Activated CD8-positive, alpha-beta T cell treated with anti-CD3 and anti-CD28 coated beads for 36 hours (primary cell): ENCODE measurements at regions of chr10 and their contacts with region 1.

Region 1: DNA sequence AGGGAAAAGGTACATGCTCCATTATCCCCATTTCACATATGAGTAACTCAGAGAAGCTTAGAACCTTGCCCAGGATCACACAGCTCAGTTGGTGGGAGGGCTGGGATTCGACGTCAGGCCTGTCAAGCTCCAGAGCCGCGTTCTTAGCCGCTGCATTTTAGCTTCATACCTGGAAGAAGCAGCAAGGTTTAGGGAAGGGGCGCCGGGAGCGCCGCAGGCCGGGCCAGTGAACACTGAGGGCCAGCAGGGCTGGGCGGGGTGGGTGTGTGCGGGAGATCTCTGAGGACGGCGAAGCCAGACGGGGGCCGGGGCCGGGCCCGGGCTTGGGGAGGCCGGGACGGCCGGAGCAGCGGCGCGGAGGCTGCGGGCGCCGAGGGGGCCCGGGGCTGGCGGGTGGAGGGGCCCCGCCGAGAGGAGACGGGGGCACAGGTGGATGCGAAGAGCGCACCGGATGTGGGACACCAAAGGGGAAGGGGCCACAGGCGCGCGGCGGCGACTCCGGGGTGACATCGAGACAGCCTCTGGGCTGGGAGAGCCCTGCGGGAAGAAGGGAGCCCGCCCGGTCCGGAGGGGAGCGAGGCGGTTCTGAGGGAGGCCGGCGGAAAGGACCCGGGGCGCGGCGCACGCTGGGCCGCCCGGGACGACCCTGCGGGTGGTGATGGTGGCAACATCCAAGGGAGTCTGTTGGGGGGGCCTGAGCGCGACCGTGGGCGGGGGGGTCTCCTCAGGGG is 498 bp downstream of the NDST2 start:
- DNase-seq: peak; percentile 65
- ATAC-seq: peak; percentile 15
- H3K4me3 Mint-ChIP-seq: peak overlapping the region; percentile 82
- H3K27ac Mint-ChIP-seq: peak overlapping the region; percentile 98
- H3K4me1 Mint-ChIP-seq: peaks cover 44% of the 10 kb centered on the region
- H3K27me3 Mint-ChIP-seq: no peaks in the 10 kb centered on the region
- CTCF ChIP-seq: no peak

Region 2: GRCh38 chr10:73743905-73744663 is 66.8 kb before region 1 on chr10 and contains the start of gene SEC24C:
- CTCF ChIA-PET with region 1: no interaction called
- POLR2A ChIA-PET with region 1: interaction called, 17 read pairs
- intact Hi-C with region 1: no loop called
- DNase-seq: peak; percentile 97
- ATAC-seq: peak; percentile 91
- H3K4me3 Mint-ChIP-seq: peak within 1 kb of the TSS; percentile 97
- H3K27ac Mint-ChIP-seq: peak within 1 kb of the TSS; percentile 100
- H3K4me1 Mint-ChIP-seq: peaks cover 36% of the 10 kb centered on the region
- H3K27me3 Mint-ChIP-seq: no peaks in the 10 kb centered on the region
- CTCF ChIP-seq: no peak
- total RNA-seq, gene SEC24C: 87.5 to 88.7 TPM

Region 3: DNA sequence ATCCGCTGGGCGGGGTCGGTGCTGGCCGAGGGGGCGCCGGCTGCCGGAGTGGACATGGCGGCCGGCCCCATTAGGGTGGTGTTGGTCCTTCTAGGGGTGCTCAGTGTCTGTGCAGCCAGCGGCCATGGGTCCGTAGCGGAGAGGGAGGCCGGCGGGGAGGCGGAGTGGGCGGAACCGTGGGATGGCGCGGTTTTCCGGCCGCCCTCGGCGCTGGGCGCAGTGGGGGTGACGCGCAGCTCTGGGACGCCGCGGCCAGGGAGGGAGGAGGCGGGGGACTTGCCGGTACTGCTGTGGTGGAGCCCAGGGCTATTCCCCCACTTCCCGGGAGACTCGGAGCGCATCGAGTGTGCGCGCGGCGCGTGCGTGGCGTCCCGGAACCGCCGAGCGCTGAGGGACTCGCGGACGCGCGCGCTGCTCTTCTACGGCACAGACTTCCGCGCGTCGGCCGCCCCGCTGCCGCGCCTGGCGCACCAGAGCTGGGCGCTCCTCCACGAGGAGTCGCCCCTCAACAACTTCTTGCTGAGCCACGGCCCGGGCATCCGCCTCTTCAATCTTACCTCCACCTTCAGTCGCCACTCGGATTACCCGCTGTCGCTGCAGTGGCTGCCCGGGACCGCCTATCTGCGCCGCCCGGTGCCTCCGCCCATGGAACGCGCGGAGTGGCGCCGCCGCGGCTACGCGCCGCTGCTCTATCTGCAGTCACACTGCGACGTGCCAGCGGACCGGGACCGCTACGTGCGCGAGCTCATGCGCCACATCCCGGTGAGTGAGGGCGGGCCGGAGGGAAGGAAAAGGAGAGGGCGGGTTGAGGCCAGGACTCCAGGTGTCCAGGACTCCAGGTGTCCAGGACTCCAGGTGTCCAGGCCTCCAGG is 38.4 kb before region 1 on chr10:
- CTCF ChIA-PET with region 1: interaction called, 4 read pairs
- POLR2A ChIA-PET with region 1: interaction called, 20 read pairs
- intact Hi-C with region 1: no loop called
- DNase-seq: peak; percentile 84
- ATAC-seq: peak; percentile 75
- H3K4me3 Mint-ChIP-seq: peak overlapping the region; percentile 89
- H3K27ac Mint-ChIP-seq: peak overlapping the region; percentile 95
- H3K4me1 Mint-ChIP-seq: peaks cover 38% of the 10 kb centered on the region
- H3K27me3 Mint-ChIP-seq: no peaks in the 10 kb centered on the region
- CTCF ChIP-seq: no peak

Region 4: DNA sequence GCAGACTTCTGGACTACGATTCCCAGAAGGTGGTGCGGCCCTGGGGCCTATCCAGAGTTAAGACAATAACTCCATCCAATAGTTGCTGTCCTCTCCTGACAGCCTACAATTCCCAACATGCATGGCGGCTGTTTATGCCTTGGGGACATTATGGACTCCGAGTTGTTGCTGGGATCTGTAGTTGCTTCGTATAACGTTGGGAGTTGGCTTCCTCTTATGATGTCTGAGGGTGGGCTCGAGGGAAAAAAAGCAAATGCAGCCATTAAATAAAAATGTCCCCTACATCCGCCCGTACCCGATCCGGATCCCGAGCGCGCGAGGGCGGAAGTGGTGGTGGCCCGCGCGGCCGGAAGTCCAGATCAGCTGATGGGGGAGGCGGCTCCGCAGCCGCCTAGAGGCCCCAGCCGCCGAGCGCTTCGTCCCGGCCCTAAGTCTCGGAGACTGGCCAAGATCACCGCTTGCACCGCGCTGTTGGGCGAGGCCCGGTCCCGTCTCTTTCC is 25.6 kb before region 1 on chr10 and contains the start of gene ZSWIM8:
- CTCF ChIA-PET with region 1: interaction called, 5 read pairs
- POLR2A ChIA-PET with region 1: interaction called, 86 read pairs
- intact Hi-C with region 1: no loop called
- DNase-seq: peak; percentile 93
- ATAC-seq: peak; percentile 88
- H3K4me3 Mint-ChIP-seq: peak within 1 kb of the TSS; percentile 84
- H3K27ac Mint-ChIP-seq: peak within 1 kb of the TSS; percentile 100
- H3K4me1 Mint-ChIP-seq: peaks cover 37% of the 10 kb centered on the region
- H3K27me3 Mint-ChIP-seq: no peaks in the 10 kb centered on the region
- CTCF ChIP-seq: no peak
- total RNA-seq, gene ZSWIM8: 30.0 to 41.0 TPM

Region 5: GRCh38 chr10:73798927-73799563 is 11.9 kb before region 1 on chr10:
- CTCF ChIA-PET with region 1: interaction called, 3 read pairs
- POLR2A ChIA-PET with region 1: interaction called, 110 read pairs
- intact Hi-C with region 1: no loop called
- DNase-seq: no peak
- ATAC-seq: peak; percentile 17
- H3K4me3 Mint-ChIP-seq: no peak overlapping the region
- H3K27ac Mint-ChIP-seq: no peak overlapping the region
- H3K4me1 Mint-ChIP-seq: peaks cover 11% of the 10 kb centered on the region
- H3K27me3 Mint-ChIP-seq: no peaks in the 10 kb centered on the region
- CTCF ChIP-seq: no peak

Region 6: GRCh38 chr10:73828161-73828560 is 17.3 kb after region 1 on chr10:
- CTCF ChIA-PET with region 1: no interaction called
- POLR2A ChIA-PET with region 1: no interaction called
- intact Hi-C with region 1: no loop called
- DNase-seq: no peak
- ATAC-seq: no peak
- H3K4me3 Mint-ChIP-seq: no peak overlapping the region
- H3K27ac Mint-ChIP-seq: no peak overlapping the region
- H3K4me1 Mint-ChIP-seq: no peaks in the 10 kb centered on the region
- H3K27me3 Mint-ChIP-seq: no peaks in the 10 kb centered on the region
- CTCF ChIP-seq: no peak

Region 7: DNA sequence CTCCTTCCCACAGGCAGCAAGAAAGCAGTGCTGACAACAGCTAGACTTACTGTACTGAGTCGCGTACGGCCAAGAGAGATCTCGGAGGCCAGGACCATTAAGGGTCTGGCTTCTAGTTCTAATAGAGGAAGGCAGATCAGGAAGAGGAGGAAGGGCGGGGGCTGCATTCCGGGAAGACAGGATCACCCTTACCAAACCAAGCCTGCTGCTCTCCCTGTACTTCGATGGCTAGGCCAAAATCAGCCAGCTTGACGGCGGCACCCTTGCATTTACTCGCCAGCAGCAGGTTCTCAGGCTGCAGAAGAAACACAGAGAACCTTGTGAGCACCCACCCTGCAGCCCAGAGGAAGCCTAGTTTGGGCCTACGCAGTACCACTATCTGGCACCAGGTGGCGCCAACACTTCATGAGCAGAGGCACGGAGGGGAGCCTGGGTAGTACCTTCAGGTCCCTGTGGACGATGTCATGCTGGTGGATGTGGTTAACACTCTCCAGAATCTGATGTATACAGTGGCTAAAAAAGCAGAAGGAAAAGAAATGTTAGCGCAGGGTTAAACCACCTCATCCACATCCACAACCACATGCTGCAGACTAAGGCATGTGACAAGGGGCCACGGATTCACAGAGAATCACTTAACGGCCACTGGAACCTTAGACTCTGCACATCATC is 38.1 kb after region 1 on chr10:
- CTCF ChIA-PET with region 1: interaction called, 10 read pairs
- POLR2A ChIA-PET with region 1: interaction called, 3 read pairs
- intact Hi-C with region 1: no loop called
- DNase-seq: peak; percentile 97
- ATAC-seq: peak; percentile 100
- H3K4me3 Mint-ChIP-seq: no peak overlapping the region
- H3K27ac Mint-ChIP-seq: peak overlapping the region; percentile 76
- H3K4me1 Mint-ChIP-seq: peaks cover 12% of the 10 kb centered on the region
- H3K27me3 Mint-ChIP-seq: no peaks in the 10 kb centered on the region
- CTCF ChIP-seq: peak; percentile 94

Region 8: DNA sequence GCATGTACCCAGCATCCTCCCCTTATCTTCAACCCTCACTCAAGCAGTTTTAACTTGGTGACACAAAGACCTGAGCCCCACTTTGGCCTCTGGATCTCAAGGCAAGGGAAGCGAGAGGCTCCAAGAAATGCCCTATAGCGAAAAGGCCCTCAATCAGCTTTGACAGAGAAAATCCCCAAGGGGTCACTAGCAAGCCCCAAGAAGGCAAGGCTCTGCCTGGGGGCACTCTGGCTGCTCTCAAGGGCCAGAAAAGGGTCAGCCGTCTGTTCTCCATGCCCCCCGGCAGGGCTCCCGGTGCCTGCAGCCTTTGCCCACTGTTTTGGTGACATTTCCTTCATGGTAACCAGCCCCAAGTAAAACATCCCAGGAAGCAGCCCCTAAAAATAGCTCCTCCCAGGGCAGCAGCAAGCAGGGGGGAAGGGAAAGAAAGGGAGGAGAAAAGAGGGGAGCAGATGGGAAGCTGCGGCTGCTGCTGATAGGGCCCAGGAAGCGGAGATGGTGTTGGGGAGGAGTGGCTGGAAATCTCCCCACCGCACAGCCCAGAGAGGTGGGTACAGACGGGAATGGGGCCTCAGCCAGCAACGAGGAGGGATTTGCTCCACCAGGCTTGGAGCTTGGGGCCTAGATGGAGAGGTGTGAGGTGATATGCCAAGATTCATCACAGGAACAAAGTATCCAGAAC is 56.4 kb after region 1 on chr10:
- CTCF ChIA-PET with region 1: no interaction called
- POLR2A ChIA-PET with region 1: no interaction called
- intact Hi-C with region 1: no loop called
- DNase-seq: no peak
- ATAC-seq: no peak
- H3K4me3 Mint-ChIP-seq: no peak overlapping the region
- H3K27ac Mint-ChIP-seq: peak overlapping the region; percentile 99
- H3K4me1 Mint-ChIP-seq: peaks cover 81% of the 10 kb centered on the region
- H3K27me3 Mint-ChIP-seq: no peaks in the 10 kb centered on the region
- CTCF ChIP-seq: no peak

Region 9: DNA sequence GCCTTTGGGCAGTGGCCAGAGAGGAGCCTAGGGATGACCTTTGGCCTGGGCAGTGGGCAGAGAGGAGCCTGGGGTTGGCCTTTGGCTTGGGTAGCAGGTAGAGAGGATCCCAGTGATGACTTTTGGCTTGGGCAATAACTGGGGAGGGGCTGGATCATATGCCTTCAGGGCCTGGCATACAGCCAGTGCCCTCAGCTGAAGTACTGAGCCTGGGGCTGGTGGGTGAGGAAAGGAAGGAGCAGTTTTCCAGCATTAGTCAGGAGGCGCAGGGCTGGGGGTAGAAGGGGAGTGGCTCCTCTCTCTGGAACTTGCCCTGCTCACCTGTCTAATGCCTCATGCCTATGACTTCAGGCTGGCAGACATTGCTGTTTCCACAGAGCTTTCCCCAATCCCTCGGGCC is 1440.0 kb after region 1 on chr10:
- CTCF ChIA-PET with region 1: no interaction called
- POLR2A ChIA-PET with region 1: no interaction called
- intact Hi-C with region 1: no loop called
- DNase-seq: no peak
- ATAC-seq: no peak
- H3K4me3 Mint-ChIP-seq: no peak overlapping the region
- H3K27ac Mint-ChIP-seq: no peak overlapping the region
- H3K4me1 Mint-ChIP-seq: no peaks in the 10 kb centered on the region
- H3K27me3 Mint-ChIP-seq: no peaks in the 10 kb centered on the region
- CTCF ChIP-seq: no peak